AG04449 (cell line): ENCODE measurements at regions of chr5 and their contacts with region 1.

Region 1: GRCh38 chr5:32887382-32887781 is 176.3 kb downstream of the NPR3 start:
- DNase-seq: no peak
- H3K4me3 ChIP-seq: no peak overlapping the region
- CTCF ChIP-seq: no peak

Region 2: DNA sequence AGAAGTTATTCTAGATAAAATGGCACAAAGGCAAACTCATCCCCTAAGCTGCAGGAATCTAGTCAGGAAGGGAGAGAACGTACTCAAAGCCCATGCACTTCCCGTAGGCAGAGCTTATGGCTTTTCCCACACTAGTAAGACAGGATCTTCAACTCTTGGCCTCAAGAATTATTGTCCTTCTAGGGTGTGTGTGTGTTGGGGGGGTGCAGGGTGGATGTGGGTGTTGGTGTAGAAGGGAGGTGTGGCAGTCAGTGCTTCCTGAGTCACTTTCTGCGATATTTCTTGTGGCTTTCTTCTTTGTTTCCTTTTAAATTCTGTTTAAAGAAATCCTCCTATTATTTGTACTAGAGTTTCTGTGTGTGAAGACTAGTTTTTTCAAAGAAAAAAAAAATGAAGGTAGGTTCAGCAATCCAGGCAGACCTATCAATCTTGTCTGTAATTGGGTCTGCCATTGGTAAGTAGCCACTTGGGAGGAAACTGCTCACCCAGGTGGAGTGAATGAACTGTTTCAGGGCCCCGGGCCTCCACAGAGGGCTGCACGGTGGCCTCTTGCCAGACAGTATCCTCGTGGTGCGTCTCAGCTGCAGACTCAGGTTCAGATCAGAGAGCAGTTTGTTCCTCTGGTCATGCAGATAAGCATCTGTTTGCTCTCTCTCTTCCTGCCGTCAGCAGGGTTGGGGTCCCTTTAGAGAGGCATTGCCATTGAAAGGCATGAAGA is 44.4 kb before region 1 on chr5:
- CTCF ChIA-PET with region 1: no interaction called
- POLR2A ChIA-PET with region 1: no interaction called
- DNase-seq: no peak
- H3K4me3 ChIP-seq: no peak overlapping the region
- CTCF ChIP-seq: no peak

Region 3: DNA sequence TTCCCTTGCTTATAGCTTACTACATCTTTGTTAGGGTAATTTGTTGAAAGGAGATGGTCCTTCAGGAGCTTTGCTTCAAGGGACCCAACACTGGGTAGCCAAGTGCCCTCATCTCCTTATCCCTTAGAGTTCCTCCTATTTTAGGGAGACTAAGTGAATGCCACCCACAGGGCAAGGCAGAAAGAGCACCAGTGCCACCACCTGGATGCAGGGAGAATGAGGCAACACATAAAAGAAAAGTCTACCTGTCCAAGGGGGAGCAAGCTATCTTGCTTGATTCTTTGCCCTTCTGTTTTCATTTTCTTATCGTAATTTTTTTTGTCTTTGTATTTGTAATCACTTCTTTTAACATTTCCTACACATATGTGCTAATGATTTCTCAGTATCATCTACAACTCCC is 29.3 kb after region 1 on chr5:
- CTCF ChIA-PET with region 1: interaction called, 10 read pairs
- POLR2A ChIA-PET with region 1: no interaction called
- DNase-seq: no peak
- H3K4me3 ChIP-seq: no peak overlapping the region
- CTCF ChIP-seq: peak; percentile 63

Region 4: GRCh38 chr5:32928761-32929160 is 41.4 kb after region 1 on chr5:
- CTCF ChIA-PET with region 1: no interaction called
- POLR2A ChIA-PET with region 1: no interaction called
- DNase-seq: no peak
- H3K4me3 ChIP-seq: no peak overlapping the region
- CTCF ChIP-seq: no peak